AG04449 (cell line): ENCODE measurements at regions of chr6 and their contacts with region 1.

Region 1: DNA sequence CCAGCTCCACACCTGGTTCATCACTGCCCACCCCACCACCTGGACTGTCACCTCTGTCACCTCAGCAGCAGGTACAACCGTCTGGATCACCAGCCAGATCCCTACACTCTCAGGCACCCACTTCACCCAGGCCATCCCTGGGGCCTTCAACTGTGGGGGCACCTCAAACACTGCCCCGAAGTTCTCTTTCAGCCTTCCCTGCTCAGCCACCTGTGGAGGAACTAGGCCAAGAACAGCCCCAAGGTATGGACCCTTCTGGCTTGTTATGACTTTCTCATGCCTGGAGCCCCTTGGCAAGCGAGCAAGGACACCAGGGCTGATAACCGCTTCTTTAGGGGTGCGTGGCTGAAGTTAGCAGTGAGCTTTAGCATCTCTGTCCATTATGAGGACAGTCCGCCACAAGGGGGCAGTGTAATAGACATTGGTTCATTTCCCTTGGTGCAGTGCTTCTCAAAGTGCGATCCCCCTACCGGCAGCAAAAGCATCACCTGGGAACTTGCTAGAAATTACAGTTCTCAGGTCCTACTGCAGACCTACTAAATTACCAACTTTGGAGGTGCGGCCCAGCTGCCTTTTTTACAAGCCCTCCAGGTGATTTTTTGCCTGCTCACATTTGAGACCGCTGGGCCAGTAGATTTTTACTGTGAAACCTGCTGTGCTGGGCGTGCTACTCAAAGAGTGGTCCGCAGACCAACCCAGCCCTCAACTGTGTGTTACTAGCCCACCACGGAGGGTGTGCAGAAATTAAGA is 32.5 kb downstream of the PNPLA1 start:
- DNase-seq: peak; percentile 36
- H3K4me3 ChIP-seq: no peak overlapping the region
- CTCF ChIP-seq: peak; percentile 92

Region 2: DNA sequence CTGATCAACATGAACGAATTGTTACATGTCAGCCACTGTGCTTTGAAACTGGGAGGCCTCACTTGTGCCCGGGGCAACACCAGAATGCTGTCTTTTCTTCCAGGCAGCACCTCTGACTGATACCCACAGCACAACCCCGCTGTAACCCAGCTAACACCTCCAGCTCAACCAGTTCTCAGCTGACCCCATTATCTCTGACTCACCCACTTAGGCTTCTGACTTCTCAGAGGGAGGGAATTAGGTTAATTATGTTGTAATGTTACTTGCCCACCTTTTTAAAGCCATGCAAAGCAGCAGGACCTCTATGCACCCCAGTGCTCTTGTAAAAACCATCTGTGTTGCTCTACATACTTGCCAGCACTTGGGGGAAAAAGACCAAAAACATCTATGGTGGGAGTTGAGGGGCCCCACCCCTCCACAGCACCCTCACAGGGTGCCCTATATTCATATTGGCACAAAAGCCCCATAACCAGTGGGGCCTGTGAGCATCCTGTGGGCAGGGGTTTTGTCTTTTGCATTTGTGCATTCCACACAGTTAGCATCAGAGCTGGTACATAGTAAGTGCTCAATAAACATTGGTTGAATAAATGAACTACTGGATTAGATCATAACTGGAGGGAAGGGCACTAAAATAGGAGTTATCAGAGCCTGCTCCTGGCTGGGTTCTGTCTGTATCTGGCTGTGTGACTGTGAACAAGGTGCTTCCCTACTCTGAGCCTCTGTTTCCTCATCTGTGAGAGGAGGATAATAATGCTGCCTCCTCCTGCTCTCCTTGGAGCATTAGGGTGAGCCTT is 12.0 kb after region 1 on chr6:
- CTCF ChIA-PET with region 1: interaction called, 405 read pairs
- POLR2A ChIA-PET with region 1: interaction called, 4 read pairs
- DNase-seq: no peak
- H3K4me3 ChIP-seq: no peak overlapping the region
- CTCF ChIP-seq: no peak

Region 3: GRCh38 chr6:36333931-36334725 is 31.7 kb after region 1 on chr6:
- CTCF ChIA-PET with region 1: interaction called, 36 read pairs
- POLR2A ChIA-PET with region 1: no interaction called
- DNase-seq: no peak
- H3K4me3 ChIP-seq: no peak overlapping the region
- CTCF ChIP-seq: no peak

Region 4: GRCh38 chr6:36350681-36351571 is 48.5 kb after region 1 on chr6:
- CTCF ChIA-PET with region 1: interaction called, 332 read pairs
- POLR2A ChIA-PET with region 1: no interaction called
- DNase-seq: peak; percentile 74
- H3K4me3 ChIP-seq: no peak overlapping the region
- CTCF ChIP-seq: no peak

Region 5: GRCh38 chr6:36368921-36369865 is 66.8 kb after region 1 on chr6:
- CTCF ChIA-PET with region 1: interaction called, 15 read pairs
- POLR2A ChIA-PET with region 1: no interaction called
- DNase-seq: peak; percentile 93
- H3K4me3 ChIP-seq: no peak overlapping the region
- CTCF ChIP-seq: no peak